ENCODE measurements at regions of chr13 and their contacts with region 1.

Region 1: GRCh38 chr13:105740739-105741138 is 794.7 kb downstream of the EFNB2 start:
- DNase-seq: no peak
- H3K4me3 ChIP-seq: no peak overlapping the region
- H3K27ac ChIP-seq: no peak overlapping the region
- H3K4me1 ChIP-seq: no peaks in the 10 kb centered on the region
- H3K27me3 ChIP-seq: no peaks in the 10 kb centered on the region
- CTCF ChIP-seq: no peak
- EP300 ChIP-seq: no peak
- POLR2A ChIP-seq: no peak

Region 2: DNA sequence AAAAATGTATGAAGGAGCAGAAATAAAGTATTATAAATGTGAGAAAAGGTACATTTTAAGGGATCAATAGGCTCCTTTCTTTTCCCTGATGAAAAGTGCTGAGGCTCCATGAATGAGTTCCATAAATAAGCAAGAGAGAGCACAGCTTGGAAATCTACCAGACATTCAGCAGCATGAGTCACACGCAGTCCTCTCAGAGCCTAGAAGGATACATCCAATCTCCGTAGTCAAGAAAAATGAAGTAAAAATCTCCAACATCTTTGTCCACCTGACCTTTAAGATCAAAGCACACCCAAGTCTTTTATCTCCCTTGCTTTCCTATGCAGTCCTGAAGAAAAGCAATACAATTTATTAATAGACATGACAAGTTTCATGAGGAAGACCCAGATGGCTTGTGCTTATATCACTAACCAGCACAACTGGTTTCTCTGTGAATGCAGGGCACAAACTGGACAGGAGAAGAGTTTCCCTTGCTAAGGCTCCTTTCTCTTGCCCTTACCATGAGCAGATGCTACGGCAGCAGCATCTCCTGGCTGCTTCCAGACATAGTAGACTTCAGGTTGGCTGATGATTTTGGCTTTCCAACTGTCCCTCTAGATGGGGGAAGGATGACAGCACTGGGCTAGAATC is 63.9 kb after region 1 on chr13:
- in situ Hi-C with region 1: loop called in 1 of 4 experiments (anchors 10 kb)
- intact Hi-C with region 1: no loop called
- DNase-seq: no peak
- H3K4me3 ChIP-seq: no peak overlapping the region
- H3K27ac ChIP-seq: no peak overlapping the region
- H3K4me1 ChIP-seq: no peaks in the 10 kb centered on the region
- H3K27me3 ChIP-seq: no peaks in the 10 kb centered on the region
- CTCF ChIP-seq: no peak
- EP300 ChIP-seq: no peak
- POLR2A ChIP-seq: no peak

Region 3: DNA sequence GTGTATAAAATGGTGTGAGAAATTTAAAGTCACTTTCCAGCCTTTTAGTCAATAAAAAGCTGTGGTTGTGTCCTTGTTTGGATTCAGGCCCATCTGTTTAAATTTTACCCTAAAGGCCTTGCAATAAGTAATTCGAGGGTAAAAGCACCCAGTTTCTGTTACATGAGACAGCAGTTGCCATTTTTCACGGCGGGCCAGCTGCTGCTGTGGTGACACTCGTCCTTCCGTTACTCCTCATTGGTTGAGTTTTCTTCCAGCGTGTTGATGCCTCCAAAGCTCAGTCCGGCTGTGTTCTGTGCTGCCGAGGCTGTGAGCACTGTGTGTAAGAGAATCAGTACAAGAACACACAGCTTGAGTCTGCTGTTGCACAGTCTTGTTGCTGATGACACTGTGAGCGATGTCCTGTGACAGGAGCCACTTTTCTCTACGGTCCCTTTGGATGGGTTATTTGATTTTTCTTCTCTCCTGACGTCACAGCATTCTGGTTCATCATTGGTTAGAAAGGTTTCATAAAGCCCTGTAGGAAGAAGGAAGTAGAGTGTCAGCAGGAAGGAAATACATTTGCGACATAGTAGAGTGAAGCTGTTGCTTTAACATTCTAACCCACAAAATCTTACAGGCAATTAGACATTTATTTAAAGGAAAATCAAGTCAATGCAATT is 1429.7 kb after region 1 on chr13:
- in situ Hi-C with region 1: no loop called
- intact Hi-C with region 1: no loop called
- DNase-seq: no peak
- H3K4me3 ChIP-seq: no peak overlapping the region
- H3K27ac ChIP-seq: no peak overlapping the region
- H3K4me1 ChIP-seq: no peaks in the 10 kb centered on the region
- H3K27me3 ChIP-seq: no peaks in the 10 kb centered on the region
- CTCF ChIP-seq: no peak
- EP300 ChIP-seq: no peak
- POLR2A ChIP-seq: no peak

Measured in transverse colon (tissue), 4 donors.